Panc1 (cell line): ENCODE measurements at regions of chr10 and their contacts with region 1.

Region 1: GRCh38 chr10:21273400-21273932 is 252.0 kb downstream of the SKIDA1 start:
- DNase-seq: no peak
- ATAC-seq: peak; percentile 55
- H3K4me3 ChIP-seq: no peak overlapping the region
- H3K27ac ChIP-seq: peak overlapping the region; percentile 87
- H3K4me1 ChIP-seq: peaks cover 20% of the 10 kb centered on the region
- H3K27me3 ChIP-seq: no peaks in the 10 kb centered on the region
- CTCF ChIP-seq: no peak

Region 2: GRCh38 chr10:21048068-21048467 is 225.4 kb before region 1 on chr10:
- CTCF ChIA-PET with region 1: no interaction called
- POLR2A ChIA-PET with region 1: no interaction called
- in situ Hi-C with region 1: no loop called
- intact Hi-C with region 1: no loop called
- DNase-seq: no peak
- ATAC-seq: peak; percentile 73; the same call in 1 of the 2 replicates
- H3K4me3 ChIP-seq: no peak overlapping the region
- H3K27ac ChIP-seq: no peak overlapping the region
- H3K4me1 ChIP-seq: peaks cover 6% of the 10 kb centered on the region
- H3K27me3 ChIP-seq: no peaks in the 10 kb centered on the region
- CTCF ChIP-seq: no peak

Region 3: GRCh38 chr10:21078410-21079329 is 194.8 kb before region 1 on chr10:
- CTCF ChIA-PET with region 1: interaction called, 3 read pairs
- POLR2A ChIA-PET with region 1: interaction called, 5 read pairs
- in situ Hi-C with region 1: no loop called
- intact Hi-C with region 1: loop called (anchors 5 kb)
- DNase-seq: peak; percentile 41
- ATAC-seq: peak; percentile 95
- H3K4me3 ChIP-seq: no peak overlapping the region
- H3K27ac ChIP-seq: peak overlapping the region; percentile 79
- H3K4me1 ChIP-seq: peaks cover 16% of the 10 kb centered on the region
- H3K27me3 ChIP-seq: no peaks in the 10 kb centered on the region
- CTCF ChIP-seq: peak; percentile 76